GM18951 (cell line): ENCODE measurements at regions of chr3 and their contacts with region 1.

Region 1: DNA sequence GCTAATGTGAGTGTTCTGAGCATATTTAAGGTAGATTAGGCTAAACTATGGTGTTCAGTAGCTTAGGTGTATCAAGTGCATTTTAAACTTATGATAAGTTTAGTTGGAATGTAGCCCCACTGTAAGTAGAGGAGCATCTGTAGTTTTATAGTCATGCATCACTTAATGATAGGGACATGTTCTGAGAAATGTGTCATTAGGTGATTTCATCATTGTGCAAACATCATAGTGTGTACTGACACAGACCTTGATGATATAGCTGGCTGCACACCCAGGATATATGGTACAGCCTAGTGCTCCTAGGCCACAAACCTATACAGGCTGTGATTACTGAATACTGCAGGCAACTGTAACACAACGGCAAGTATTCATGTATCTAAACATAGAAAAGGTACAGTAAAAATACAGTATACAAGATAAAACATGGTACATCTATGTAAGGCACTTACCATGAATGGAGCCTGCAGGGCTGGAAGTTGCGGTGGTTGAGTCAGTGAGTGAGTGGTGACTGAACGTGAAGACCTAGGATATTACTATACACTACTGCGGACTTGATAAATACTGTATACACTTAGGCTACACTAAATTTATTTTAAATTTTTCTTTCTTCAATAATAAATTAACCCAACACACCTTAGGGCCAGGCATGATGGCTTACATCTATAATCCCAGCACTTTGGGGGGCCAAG is 17.9 kb downstream of the DNAH1 start:
- POLR2A ChIP-seq: no peak

Region 2: GRCh38 chr3:52299879-52300611 is 34.0 kb before region 1 on chr3:
- in situ Hi-C with region 1: loop called (anchors 5 kb)
- POLR2A ChIP-seq: peak; percentile 26